ENCODE measurements at regions of chr7 and their contacts with region 1.

Region 1: DNA sequence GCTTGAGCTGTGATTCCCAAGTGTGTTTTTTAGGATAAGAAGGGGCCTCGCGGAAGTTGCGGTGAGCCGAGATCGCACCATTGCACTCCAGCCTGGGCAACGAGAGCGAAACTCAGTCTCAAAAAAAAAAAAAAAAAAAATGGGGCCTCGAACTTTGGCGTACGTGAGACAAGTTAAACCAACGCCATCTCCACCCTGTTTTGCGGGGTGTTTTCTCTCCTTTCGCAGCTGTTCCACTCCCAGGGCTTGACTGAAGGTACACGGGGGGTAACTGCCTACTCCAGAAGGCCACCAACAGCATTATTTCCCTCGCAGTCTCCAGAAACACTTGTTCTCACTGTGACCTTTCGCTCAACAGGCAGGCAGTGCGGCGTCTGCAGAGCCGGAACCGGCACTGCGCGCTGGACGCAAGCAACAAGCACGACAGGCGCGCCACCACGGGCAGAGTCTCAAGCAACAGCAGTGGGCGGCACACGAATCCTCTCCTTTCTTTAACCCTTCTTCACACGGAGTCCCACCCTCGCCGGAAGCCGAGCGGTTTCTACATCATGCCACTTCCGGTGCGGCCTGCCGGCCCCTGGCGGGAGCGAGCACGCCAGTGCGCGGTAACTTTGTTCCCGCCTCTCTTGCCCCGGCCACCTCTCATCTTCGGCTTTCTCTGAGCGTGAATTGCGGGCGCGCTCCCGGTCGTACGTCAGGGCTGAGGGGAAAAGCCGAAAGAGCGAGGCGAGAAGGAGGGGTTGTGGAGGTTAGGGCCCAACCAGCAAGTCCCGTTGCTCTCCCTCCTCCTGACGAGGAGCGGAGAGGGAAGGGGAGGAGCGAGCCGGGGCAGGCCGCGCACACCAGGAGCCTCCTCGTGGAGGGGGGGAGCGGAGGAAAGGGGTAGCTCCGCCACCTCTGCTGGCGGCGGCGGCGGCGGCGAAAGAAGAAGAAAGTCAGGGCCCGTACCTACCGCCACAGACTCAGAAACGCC is 814 bp upstream of the CDK13 start:
- DNase-seq: peak; percentile 99
- H3K4me3 Mint-ChIP-seq: peak overlapping the region; percentile 100
- H3K27ac Mint-ChIP-seq: peak overlapping the region; percentile 100
- H3K4me1 Mint-ChIP-seq: peaks cover 29% of the 10 kb centered on the region
- H3K27me3 Mint-ChIP-seq: peaks cover 5% of the 10 kb centered on the region

Region 2: GRCh38 chr7:39589323-39590111 is 359.7 kb before region 1 on chr7:
- CTCF ChIA-PET with region 1: no interaction called
- POLR2A ChIA-PET with region 1: no interaction called
- intact Hi-C with region 1: loop called (anchors 1 kb)
- DNase-seq: peak; percentile 85
- H3K4me3 Mint-ChIP-seq: peak overlapping the region; percentile 20
- H3K27ac Mint-ChIP-seq: peak overlapping the region; percentile 34
- H3K4me1 Mint-ChIP-seq: peaks cover 38% of the 10 kb centered on the region
- H3K27me3 Mint-ChIP-seq: no peaks in the 10 kb centered on the region

Region 3: GRCh38 chr7:39732837-39733804 is 216.1 kb before region 1 on chr7:
- CTCF ChIA-PET with region 1: interaction called, 3 read pairs
- POLR2A ChIA-PET with region 1: interaction called, 3 read pairs
- intact Hi-C with region 1: loop called (anchors 2 kb)
- DNase-seq: peak; percentile 98
- H3K4me3 Mint-ChIP-seq: peak overlapping the region; percentile 88
- H3K27ac Mint-ChIP-seq: peak overlapping the region; percentile 75
- H3K4me1 Mint-ChIP-seq: peaks cover 33% of the 10 kb centered on the region
- H3K27me3 Mint-ChIP-seq: no peaks in the 10 kb centered on the region

Region 4: GRCh38 chr7:39890411-39890810 is 58.8 kb before region 1 on chr7:
- CTCF ChIA-PET with region 1: no interaction called
- POLR2A ChIA-PET with region 1: no interaction called
- intact Hi-C with region 1: no loop called
- DNase-seq: no peak
- H3K4me3 Mint-ChIP-seq: no peak overlapping the region
- H3K27ac Mint-ChIP-seq: no peak overlapping the region
- H3K4me1 Mint-ChIP-seq: no peaks in the 10 kb centered on the region
- H3K27me3 Mint-ChIP-seq: peaks cover 2% of the 10 kb centered on the region

Region 5: GRCh38 chr7:39979406-39980073 is 30.3 kb after region 1 on chr7:
- CTCF ChIA-PET with region 1: no interaction called
- POLR2A ChIA-PET with region 1: interaction called, 3 read pairs
- intact Hi-C with region 1: loop called (anchors 2 kb)
- DNase-seq: peak; percentile 41
- H3K4me3 Mint-ChIP-seq: no peak overlapping the region
- H3K27ac Mint-ChIP-seq: no peak overlapping the region
- H3K4me1 Mint-ChIP-seq: peaks cover 15% of the 10 kb centered on the region
- H3K27me3 Mint-ChIP-seq: no peaks in the 10 kb centered on the region

Region 6: DNA sequence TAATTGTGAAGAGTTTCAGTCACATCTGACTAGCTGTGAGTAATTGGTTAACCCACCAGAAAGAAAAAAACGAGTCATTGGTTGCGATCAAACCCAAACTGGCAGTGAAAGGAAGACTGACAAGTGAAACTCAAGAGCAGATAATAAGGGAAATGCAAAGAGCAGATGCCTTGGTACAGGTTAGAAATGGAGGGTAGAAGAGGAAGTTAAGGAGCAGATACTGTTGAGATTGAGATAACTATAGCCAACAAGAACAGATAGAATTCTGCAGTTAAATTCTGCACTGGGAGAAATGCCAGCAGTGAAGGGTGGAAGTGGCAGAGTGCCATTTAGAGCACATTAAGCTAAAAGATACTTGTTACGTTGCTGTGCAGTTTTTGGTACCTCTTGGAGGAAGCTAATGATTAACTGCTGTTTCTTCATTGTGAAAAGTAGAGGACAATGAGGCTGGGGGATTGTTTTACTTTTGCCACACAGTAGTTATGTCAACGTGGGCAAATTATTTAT is 66.6 kb after region 1 on chr7:
- CTCF ChIA-PET with region 1: interaction called, 3 read pairs
- POLR2A ChIA-PET with region 1: no interaction called
- intact Hi-C with region 1: loop called (anchors 2 kb)
- DNase-seq: no peak
- H3K4me3 Mint-ChIP-seq: no peak overlapping the region
- H3K27ac Mint-ChIP-seq: peak overlapping the region; percentile 26
- H3K4me1 Mint-ChIP-seq: peaks cover 24% of the 10 kb centered on the region
- H3K27me3 Mint-ChIP-seq: no peaks in the 10 kb centered on the region

Region 7: DNA sequence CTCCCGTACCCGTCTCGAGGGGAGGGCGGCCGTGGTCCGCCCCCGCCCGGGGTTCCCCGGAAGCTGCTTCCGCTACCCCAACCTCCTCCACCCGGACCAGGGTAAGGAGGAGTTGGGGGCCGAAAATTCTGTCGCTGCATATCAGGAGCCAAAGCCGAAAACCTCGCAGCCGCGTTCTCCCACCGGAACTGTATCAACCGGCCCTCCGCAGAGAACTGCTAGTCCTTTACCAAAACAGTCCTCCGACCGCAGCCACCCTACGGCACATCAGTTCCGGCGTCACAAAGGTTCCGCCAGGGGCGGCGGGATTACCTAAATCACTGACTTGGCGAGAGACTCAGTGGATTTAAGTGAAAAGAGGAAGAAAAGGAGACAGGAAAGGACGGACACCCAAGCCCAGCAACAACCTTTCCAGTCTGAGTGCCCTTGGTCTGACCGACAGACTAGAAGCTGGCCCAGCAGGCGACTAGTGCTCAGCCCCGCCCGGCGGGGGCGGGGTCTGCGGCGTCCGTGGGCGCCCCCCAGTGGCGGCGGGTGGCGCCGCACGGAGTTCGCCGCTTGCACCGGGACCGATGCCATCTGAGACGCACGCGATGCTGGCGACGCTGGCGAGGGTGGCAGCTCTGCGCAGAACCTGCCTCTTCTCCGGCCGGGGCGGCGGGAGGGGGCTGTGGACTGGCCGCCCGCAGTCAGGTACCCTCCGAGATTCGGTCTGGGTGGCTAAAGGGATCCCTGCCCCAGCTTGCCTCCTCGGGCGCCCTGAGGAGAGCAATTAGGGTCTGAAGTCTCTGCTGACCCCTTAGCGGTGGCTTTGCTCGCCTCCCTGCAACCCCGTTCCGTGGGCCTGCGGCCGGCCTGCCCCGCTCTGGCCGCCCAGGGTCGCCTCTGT is 185.4 kb after region 1 on chr7 and contains the starts of genes MPLKIP and SUGCT:
- CTCF ChIA-PET with region 1: interaction called, 6 read pairs
- POLR2A ChIA-PET with region 1: interaction called, 6 read pairs
- intact Hi-C with region 1: loop called (anchors 1 kb)
- DNase-seq: peak; percentile 88
- H3K4me3 Mint-ChIP-seq: peak within 1 kb of the TSS; percentile 92
- H3K27ac Mint-ChIP-seq: peak within 1 kb of the TSS; percentile 97
- H3K4me1 Mint-ChIP-seq: peaks cover 22% of the 10 kb centered on the region
- H3K27me3 Mint-ChIP-seq: peaks cover 6% of the 10 kb centered on the region
- total RNA-seq, gene MPLKIP: 34.6 to 34.7 TPM
- total RNA-seq, gene SUGCT: 0.76 to 1.5 TPM

Region 8: GRCh38 chr7:40283391-40283790 is 334.1 kb after region 1 on chr7:
- CTCF ChIA-PET with region 1: no interaction called
- POLR2A ChIA-PET with region 1: no interaction called
- intact Hi-C with region 1: no loop called
- DNase-seq: no peak
- H3K4me3 Mint-ChIP-seq: no peak overlapping the region
- H3K27ac Mint-ChIP-seq: no peak overlapping the region
- H3K4me1 Mint-ChIP-seq: no peaks in the 10 kb centered on the region
- H3K27me3 Mint-ChIP-seq: peaks cover 2% of the 10 kb centered on the region